CD4-positive, alpha-beta T cell (primary cell): ENCODE measurements at regions of chr16 and their contacts with region 1.

Region 1: DNA sequence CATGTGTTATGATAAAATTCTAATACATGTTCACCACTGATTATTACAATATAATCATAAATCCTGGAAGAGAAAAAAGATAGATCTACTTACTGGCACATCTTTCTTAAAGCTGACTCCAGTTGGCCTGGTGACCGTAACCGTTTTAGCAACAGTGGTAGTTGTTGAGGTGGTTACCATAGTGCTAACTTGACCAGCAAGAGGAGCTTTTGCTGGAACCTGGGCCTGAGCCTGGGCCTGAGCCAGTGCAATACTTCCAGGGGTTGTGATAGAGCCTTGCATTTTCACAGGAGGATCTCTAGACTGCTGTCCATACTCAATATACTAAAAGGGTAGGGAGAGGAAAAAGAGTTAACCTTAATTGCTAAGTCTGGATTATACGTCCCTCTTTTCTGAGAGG is 36.2 kb downstream of the SETD6 start:
- DNase-seq: no peak
- ATAC-seq: no peak
- H3K4me3 ChIP-seq: no peak overlapping the region
- H3K4me3 Mint-ChIP-seq: no peak overlapping the region
- H3K27ac ChIP-seq: no peak overlapping the region
- H3K27ac Mint-ChIP-seq: no peak overlapping the region
- H3K4me1 ChIP-seq: no peaks in the 10 kb centered on the region
- H3K4me1 Mint-ChIP-seq: no peaks in the 10 kb centered on the region
- H3K27me3 ChIP-seq: no peaks in the 10 kb centered on the region
- H3K27me3 Mint-ChIP-seq: no peaks in the 10 kb centered on the region
- CTCF ChIP-seq: no peak

Region 2: DNA sequence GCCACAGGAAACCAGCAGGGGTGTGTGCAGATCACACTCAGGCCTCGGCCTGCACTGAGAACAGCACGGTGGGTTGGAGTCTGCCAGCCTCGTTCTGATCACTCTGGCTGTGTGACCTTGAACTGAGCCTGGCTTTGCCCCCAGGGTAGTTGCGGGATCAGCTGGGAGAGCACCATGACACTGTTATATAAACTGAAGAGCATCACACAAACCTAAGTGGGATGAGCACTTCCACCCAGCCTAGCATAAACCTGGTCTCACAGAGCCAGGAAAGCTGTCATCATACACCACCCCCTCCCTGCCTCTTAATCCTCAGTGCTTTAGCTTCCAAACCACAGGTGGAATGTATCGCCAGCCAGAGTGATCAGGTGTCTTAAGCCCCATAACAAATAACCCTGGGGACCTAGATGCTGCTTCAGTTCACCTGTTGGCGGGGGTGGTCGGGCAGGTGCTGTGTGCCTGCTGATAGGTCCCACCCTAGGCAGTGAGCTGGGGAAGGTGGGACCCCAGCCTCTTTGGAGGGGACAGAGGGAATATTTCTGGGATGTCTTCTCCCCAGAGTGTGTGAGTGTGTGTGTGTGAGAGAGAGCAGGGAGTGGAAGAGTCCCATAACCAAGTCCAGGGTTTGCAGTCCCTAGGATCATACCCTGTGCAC is 80.0 kb before region 1 on chr16:
- CTCF ChIA-PET with region 1: no interaction called
- POLR2A ChIA-PET with region 1: no interaction called
- intact Hi-C with region 1: no loop called
- DNase-seq: peak in 1 of 14 experiments; percentile 2
- ATAC-seq: no peak
- H3K4me3 ChIP-seq: no peak overlapping the region
- H3K4me3 Mint-ChIP-seq: no peak overlapping the region
- H3K27ac ChIP-seq: no peak overlapping the region
- H3K27ac Mint-ChIP-seq: no peak overlapping the region
- H3K4me1 ChIP-seq: no peaks in the 10 kb centered on the region
- H3K4me1 Mint-ChIP-seq: no peaks in the 10 kb centered on the region
- H3K27me3 ChIP-seq: peaks cover 18 to 23% of the 10 kb centered on the region in 2 experiments
- H3K27me3 Mint-ChIP-seq: peaks cover 58% of the 10 kb centered on the region
- CTCF ChIP-seq: no peak

Region 3: DNA sequence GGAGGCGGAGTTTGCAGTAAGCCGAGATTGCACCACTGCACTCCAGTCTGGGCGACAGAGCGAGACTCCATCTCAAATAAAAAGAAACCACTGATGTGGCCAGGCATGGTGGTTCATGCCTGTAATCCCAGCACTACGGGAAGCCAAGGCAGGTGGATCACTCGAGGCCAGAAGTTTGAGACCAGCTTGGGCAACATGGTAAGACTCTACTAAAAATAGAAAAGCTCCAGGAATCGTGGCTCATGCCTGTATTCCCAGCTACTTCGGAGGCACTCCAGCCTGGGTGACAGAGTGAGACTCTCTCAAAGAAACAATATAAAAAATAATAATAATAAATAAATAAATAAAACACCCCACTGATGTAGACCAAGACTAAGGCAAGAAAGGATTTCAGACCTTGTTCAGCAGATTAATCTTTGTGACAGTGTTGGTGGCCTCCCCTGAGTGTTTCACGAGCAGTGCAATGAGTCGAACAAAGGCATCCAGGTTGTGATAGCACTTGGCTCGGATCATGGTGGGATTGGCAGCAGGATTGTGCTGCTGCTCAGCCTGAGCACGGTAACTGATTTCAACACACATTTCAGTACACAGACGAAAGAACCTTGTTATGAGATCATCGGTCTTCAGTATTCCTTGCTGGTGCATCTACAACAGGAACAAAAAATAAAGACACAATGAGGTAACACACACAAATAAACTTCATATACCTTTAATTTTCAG is 17.6 kb before region 1 on chr16:
- CTCF ChIA-PET with region 1: no interaction called
- POLR2A ChIA-PET with region 1: no interaction called
- intact Hi-C with region 1: loop called in 1 of 2 experiments (anchors 1 kb)
- DNase-seq: no peak
- ATAC-seq: no peak
- H3K4me3 ChIP-seq: no peak overlapping the region
- H3K4me3 Mint-ChIP-seq: no peak overlapping the region
- H3K27ac ChIP-seq: no peak overlapping the region
- H3K27ac Mint-ChIP-seq: no peak overlapping the region
- H3K4me1 ChIP-seq: no peaks in the 10 kb centered on the region
- H3K4me1 Mint-ChIP-seq: no peaks in the 10 kb centered on the region
- H3K27me3 ChIP-seq: no peaks in the 10 kb centered on the region
- H3K27me3 Mint-ChIP-seq: no peaks in the 10 kb centered on the region
- CTCF ChIP-seq: no peak

Region 4: DNA sequence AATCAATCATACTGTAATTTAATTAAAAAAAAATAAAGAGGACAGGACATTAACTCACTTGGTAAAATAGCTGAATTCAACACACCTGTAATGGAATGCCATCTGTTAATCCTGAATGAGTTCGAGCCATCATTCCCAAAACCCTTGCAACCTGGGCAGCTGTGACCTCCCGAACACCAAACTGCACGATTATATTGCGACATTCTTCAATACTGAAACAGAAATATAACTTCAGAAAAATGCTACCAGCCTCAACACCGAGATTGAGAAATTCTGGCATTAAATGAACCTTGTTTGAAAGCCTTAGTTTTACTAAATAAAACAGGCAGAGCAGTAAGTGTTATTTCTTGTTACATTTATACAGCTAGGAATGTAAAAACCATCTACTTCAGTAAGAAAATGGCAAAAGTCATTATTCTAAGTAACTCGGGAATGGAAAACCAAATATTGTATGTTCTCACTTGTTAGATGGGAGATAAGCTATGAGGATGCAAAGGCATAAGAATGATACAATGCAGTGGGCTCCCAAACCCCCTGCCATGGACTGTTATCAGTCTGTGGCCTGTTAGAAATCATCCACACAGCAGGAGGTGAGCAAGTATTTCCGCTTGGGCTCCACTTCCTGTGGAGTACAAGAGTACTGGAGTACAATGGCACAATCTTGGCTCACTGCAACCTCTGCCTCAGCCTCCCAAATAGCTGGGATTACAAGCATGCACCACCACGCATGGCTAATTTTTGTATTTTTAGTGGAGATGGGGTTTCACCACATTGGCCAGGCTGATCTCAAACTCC is 31.7 kb after region 1 on chr16:
- CTCF ChIA-PET with region 1: interaction called, 3 read pairs
- POLR2A ChIA-PET with region 1: no interaction called
- intact Hi-C with region 1: loop called in 1 of 2 experiments (anchors 5 kb)
- DNase-seq: no peak
- ATAC-seq: no peak
- H3K4me3 ChIP-seq: no peak overlapping the region
- H3K4me3 Mint-ChIP-seq: no peak overlapping the region
- H3K27ac ChIP-seq: no peak overlapping the region
- H3K27ac Mint-ChIP-seq: peak overlapping the region; percentile 47
- H3K4me1 ChIP-seq: no peaks in the 10 kb centered on the region
- H3K4me1 Mint-ChIP-seq: no peaks in the 10 kb centered on the region
- H3K27me3 ChIP-seq: no peaks in the 10 kb centered on the region
- H3K27me3 Mint-ChIP-seq: no peaks in the 10 kb centered on the region
- CTCF ChIP-seq: no peak

Region 5: GRCh38 chr16:58670177-58670576 is 118.7 kb after region 1 on chr16:
- CTCF ChIA-PET with region 1: no interaction called
- POLR2A ChIA-PET with region 1: no interaction called
- intact Hi-C with region 1: no loop called
- DNase-seq: no peak
- ATAC-seq: no peak
- H3K4me3 ChIP-seq: no peak overlapping the region
- H3K4me3 Mint-ChIP-seq: no peak overlapping the region
- H3K27ac ChIP-seq: no peak overlapping the region
- H3K27ac Mint-ChIP-seq: no peak overlapping the region
- H3K4me1 ChIP-seq: no peaks in the 10 kb centered on the region
- H3K4me1 Mint-ChIP-seq: no peaks in the 10 kb centered on the region
- H3K27me3 ChIP-seq: no peaks in the 10 kb centered on the region
- H3K27me3 Mint-ChIP-seq: no peaks in the 10 kb centered on the region
- CTCF ChIP-seq: no peak

Region 6: DNA sequence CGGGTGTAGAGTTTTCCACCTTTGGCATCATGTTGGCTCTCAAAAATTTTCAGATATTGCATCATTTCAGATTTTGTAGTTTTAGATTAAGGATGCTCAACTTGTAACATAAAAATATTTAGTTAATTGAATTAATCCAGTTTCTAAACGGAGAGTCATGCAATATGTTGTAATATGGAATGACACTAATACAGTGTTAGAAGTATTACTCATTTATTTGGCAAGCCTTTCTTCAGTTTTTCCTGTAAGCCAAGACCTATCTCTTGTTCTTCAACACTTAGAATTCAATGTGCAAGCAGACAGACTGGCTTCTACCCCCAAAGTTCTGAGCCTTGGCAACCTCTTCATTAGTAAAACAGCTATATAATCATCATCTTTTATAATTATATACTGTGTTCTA is 1167.6 kb after region 1 on chr16:
- CTCF ChIA-PET with region 1: no interaction called
- POLR2A ChIA-PET with region 1: no interaction called
- intact Hi-C with region 1: no loop called
- DNase-seq: no peak
- ATAC-seq: no peak
- H3K4me3 ChIP-seq: no peak overlapping the region
- H3K4me3 Mint-ChIP-seq: no peak overlapping the region
- H3K27ac ChIP-seq: no peak overlapping the region
- H3K27ac Mint-ChIP-seq: no peak overlapping the region
- H3K4me1 ChIP-seq: no peaks in the 10 kb centered on the region
- H3K4me1 Mint-ChIP-seq: no peaks in the 10 kb centered on the region
- H3K27me3 ChIP-seq: no peaks in the 10 kb centered on the region
- H3K27me3 Mint-ChIP-seq: no peaks in the 10 kb centered on the region
- CTCF ChIP-seq: no peak